ENCODE measurements at regions of chr7 and their contacts with region 1.

Region 1: GRCh38 chr7:24757353-24758275 is at the start of gene GSDME:
- DNase-seq: peak; percentile 65
- H3K4me3 Mint-ChIP-seq: peak within 1 kb of the TSS; percentile 90
- H3K27ac Mint-ChIP-seq: peak within 1 kb of the TSS; percentile 92
- H3K4me1 Mint-ChIP-seq: peaks cover 23% of the 10 kb centered on the region
- H3K27me3 Mint-ChIP-seq: no peaks in the 10 kb centered on the region
- CTCF ChIP-seq: no peak
- total RNA-seq, gene GSDME: 41.6 and 46.1 TPM in 2 replicates

Region 2: GRCh38 chr7:24741691-24742504 is 15.7 kb before region 1 on chr7:
- CTCF ChIA-PET with region 1: interaction called, 3 read pairs
- POLR2A ChIA-PET with region 1: interaction called, 60 read pairs
- intact Hi-C with region 1: no loop called
- DNase-seq: peak; percentile 87
- H3K4me3 Mint-ChIP-seq: no peak overlapping the region
- H3K27ac Mint-ChIP-seq: peak overlapping the region; percentile 90
- H3K4me1 Mint-ChIP-seq: peaks cover 30% of the 10 kb centered on the region
- H3K27me3 Mint-ChIP-seq: no peaks in the 10 kb centered on the region
- CTCF ChIP-seq: no peak

Measured in MCF 10A (cell line).